ENCODE measurements at regions of chr2 and their contacts with region 1.

Region 1: DNA sequence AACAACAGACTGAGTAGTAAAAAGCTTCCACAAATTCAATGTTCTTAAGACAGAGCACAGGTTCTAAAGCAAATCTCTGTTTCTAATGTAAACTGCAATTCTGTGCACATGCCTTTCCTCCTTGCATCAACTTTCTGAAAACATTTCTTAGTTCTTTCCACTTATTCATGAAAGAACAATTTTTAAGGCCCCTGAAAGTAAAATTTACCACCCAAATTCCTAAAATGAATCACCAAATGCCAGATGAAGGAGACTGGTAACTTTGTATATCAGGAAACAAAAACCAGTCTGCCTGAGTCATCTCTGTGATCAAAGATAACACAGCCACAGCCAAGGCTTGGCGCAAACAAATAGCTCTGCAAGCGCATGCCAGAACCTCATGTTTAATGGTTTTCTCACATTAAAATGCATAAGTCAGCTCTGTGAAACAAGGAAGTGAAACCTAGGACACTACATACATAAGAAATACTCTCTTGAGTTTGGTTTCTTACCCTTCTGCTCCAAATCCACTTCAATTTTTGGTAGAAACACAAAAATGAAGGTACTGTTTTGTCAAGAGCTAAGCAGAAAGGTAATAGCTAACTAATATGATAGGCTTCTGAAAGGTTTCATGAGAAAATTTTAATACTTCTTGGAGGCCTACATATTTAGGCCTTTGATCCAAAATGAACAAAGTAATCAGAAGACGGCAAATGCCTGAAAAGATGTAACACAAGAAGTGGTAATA is 169.4 kb downstream of the THADA start:
- DNase-seq: peak; percentile 96
- ATAC-seq: peak; percentile 83
- H3K4me3 ChIP-seq: no peak overlapping the region
- H3K27ac ChIP-seq: peak overlapping the region; percentile 94
- H3K4me1 ChIP-seq: peaks cover 44% of the 10 kb centered on the region
- H3K27me3 ChIP-seq: no peaks in the 10 kb centered on the region
- CTCF ChIP-seq: no peak
- EP300 ChIP-seq: peak; percentile 96 to 98
- POLR2A ChIP-seq: 0 out of 2 replicates have a peak, but pooled peaks have one; percentile 27
- RAD21 ChIP-seq: no peak; the same call in 1 of the 2 replicates

Region 2: DNA sequence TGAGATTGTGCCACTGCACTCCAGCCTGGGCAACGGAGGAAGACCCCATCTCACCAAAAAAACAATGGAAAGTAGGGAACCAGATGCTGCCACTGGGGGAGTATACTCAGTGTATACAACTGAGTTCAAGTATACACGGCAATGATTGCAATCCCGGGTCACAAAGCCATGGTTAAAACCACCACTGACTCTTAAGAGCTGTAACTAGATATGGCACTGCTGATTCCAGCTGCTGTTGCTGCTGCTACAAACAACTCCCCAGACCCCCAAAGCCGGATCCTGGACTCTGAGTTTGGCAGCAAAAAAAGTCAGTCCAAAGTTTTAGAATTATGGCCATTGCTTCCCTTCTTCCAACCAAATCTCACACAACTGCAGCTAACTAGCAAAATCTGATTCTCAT is 1021.8 kb before region 1 on chr2:
- CTCF ChIA-PET with region 1: no interaction called
- POLR2A ChIA-PET with region 1: no interaction called
- RAD21 ChIA-PET with region 1: no interaction called
- SMC1A ChIA-PET with region 1: no interaction called
- in situ Hi-C with region 1: no loop called
- intact Hi-C with region 1: no loop called
- DNase-seq: no peak
- ATAC-seq: no peak
- H3K4me3 ChIP-seq: no peak overlapping the region
- H3K27ac ChIP-seq: no peak overlapping the region
- H3K4me1 ChIP-seq: no peaks in the 10 kb centered on the region
- H3K27me3 ChIP-seq: no peaks in the 10 kb centered on the region; a peak in 1 of 4 replicates
- CTCF ChIP-seq: no peak
- EP300 ChIP-seq: no peak
- POLR2A ChIP-seq: no peak
- RAD21 ChIP-seq: no peak

Region 3: DNA sequence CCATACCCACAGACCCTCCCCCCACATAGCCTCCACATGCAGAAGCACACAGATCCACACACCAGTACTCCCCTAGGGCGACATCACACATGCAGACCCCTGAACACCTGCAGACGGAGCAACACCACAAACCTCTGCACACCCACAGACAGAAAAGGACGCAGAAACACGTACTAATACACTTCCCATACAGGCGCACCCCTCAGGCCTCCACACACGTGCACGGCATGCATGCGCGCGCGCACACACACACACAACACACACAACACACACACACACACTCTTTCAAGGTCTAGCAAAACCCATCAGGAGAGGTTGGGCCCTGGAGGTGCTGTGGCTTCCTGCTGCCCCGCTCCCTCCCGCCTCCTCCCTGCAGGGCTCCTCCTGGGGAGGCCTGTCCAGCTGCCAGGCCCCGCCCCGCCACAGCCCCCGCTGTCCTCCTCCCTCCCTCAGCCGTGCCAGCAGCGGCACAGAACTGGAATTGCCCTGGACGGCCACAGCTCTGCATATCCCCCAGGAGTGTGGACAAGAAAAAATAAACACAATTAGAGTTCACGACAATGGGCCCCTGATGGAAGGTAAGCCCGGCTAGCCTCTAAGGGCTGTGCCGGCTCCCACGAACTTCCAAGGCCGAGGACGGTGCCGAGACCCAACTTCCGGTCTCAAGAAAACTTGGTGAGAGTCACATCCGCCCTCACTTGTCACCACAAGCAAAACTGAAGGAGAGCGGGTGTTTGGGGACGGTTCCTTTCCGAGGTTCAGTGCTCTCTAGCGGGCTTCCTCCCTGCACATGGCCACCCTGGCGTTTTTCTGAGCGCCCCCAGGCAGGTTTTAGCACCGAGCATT is 206.9 kb before region 1 on chr2:
- CTCF ChIA-PET with region 1: interaction called, 3 read pairs
- POLR2A ChIA-PET with region 1: interaction called, 3 read pairs
- RAD21 ChIA-PET with region 1: interaction called, 14 read pairs
- SMC1A ChIA-PET with region 1: interaction called, 4 read pairs
- in situ Hi-C with region 1: no loop called
- intact Hi-C with region 1: no loop called
- DNase-seq: peak; percentile 80
- ATAC-seq: peak; percentile 75
- H3K4me3 ChIP-seq: peak overlapping the region; percentile 81
- H3K27ac ChIP-seq: peak overlapping the region; percentile 88
- H3K4me1 ChIP-seq: peaks cover 31% of the 10 kb centered on the region
- H3K27me3 ChIP-seq: no peaks in the 10 kb centered on the region
- CTCF ChIP-seq: no peak; a peak in 1 of 6 replicates
- EP300 ChIP-seq: peak; percentile 32 to 46; a peak in 1 of 4 replicates
- POLR2A ChIP-seq: no peak
- RAD21 ChIP-seq: no peak

Region 4: GRCh38 chr2:43387092-43388062 is 39.1 kb before region 1 on chr2:
- CTCF ChIA-PET with region 1: interaction called, 15 read pairs
- POLR2A ChIA-PET with region 1: interaction called, 37 read pairs
- RAD21 ChIA-PET with region 1: interaction called, 134 read pairs
- SMC1A ChIA-PET with region 1: interaction called, 79 read pairs
- in situ Hi-C with region 1: no loop called
- intact Hi-C with region 1: loop called (anchors 1 kb)
- DNase-seq: peak; percentile 86
- ATAC-seq: peak; percentile 84
- H3K4me3 ChIP-seq: peak overlapping the region; percentile 56
- H3K27ac ChIP-seq: peak overlapping the region; percentile 99
- H3K4me1 ChIP-seq: peaks cover 53% of the 10 kb centered on the region
- H3K27me3 ChIP-seq: no peaks in the 10 kb centered on the region
- CTCF ChIP-seq: no peak
- EP300 ChIP-seq: peak; percentile 81 to 92; a peak in 3 of 4 replicates
- POLR2A ChIP-seq: no peak
- RAD21 ChIP-seq: no peak

Region 5: DNA sequence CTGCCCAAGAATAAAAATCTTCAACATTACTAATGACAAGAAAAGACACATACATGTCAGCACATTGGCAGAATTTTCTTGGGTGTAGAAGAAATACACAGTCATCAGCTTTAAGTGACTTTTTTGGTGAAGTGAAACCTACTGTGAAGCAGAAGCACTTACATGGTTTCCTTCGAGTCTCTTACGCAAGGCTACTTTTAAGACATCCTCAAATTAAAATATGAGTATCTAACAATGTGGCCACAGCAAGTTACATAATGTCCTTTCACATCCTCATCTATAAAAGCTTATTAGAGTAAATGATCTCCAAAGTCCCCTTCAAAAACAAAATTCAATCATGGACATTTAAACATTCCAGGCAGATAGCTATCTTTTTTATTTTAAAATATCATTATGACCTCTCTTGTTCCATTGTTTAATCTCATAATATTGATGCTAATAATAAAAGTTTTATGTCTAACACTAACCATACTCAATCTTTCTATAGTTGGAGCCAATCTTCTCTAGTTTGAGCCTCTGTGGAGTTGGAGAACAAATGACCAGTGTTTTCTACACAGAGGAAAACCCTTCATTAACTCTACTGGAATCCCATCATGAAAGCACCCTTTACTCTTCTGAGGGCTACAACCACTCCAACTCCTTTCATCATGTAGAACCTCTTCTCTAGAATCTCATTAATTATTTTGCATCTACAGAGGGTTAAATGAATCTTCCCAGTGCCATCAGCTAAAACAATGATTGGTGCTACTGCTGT is 17.9 kb before region 1 on chr2:
- CTCF ChIA-PET with region 1: interaction called, 112 read pairs
- POLR2A ChIA-PET with region 1: interaction called, 185 read pairs
- RAD21 ChIA-PET with region 1: interaction called, 360 read pairs
- SMC1A ChIA-PET with region 1: interaction called, 378 read pairs
- in situ Hi-C with region 1: no loop called
- intact Hi-C with region 1: loop called (anchors 1 kb)
- DNase-seq: peak; percentile 76
- ATAC-seq: peak; percentile 86
- H3K4me3 ChIP-seq: no peak overlapping the region
- H3K27ac ChIP-seq: peak overlapping the region; percentile 94
- H3K4me1 ChIP-seq: peaks cover 50% of the 10 kb centered on the region
- H3K27me3 ChIP-seq: no peaks in the 10 kb centered on the region
- CTCF ChIP-seq: no peak
- EP300 ChIP-seq: peak; percentile 71 to 87; a peak in 2 of 4 replicates
- POLR2A ChIP-seq: no peak
- RAD21 ChIP-seq: no peak

Region 6: GRCh38 chr2:43461453-43462073 is 35.1 kb after region 1 on chr2:
- CTCF ChIA-PET with region 1: interaction called, 4 read pairs
- POLR2A ChIA-PET with region 1: interaction called, 9 read pairs
- RAD21 ChIA-PET with region 1: interaction called, 36 read pairs
- SMC1A ChIA-PET with region 1: interaction called, 46 read pairs
- in situ Hi-C with region 1: no loop called
- intact Hi-C with region 1: loop called (anchors 2 kb)
- DNase-seq: peak; percentile 81
- ATAC-seq: peak; percentile 97
- H3K4me3 ChIP-seq: peak overlapping the region; percentile 12; the same call in 1 of the 2 replicates
- H3K27ac ChIP-seq: peak overlapping the region; percentile 76
- H3K4me1 ChIP-seq: peaks cover 40% of the 10 kb centered on the region
- H3K27me3 ChIP-seq: no peaks in the 10 kb centered on the region
- CTCF ChIP-seq: no peak
- EP300 ChIP-seq: peak; percentile 53 to 62; a peak in 2 of 4 replicates
- POLR2A ChIP-seq: peak; percentile 54
- RAD21 ChIP-seq: peak; percentile 24; the same call in 1 of the 2 replicates

Measured in GM12878 (cell line).